Caco-2 (cell line): ENCODE measurements at regions of chr4 and their contacts with region 1.

Region 1: GRCh38 chr4:81351654-81352445 is 119.9 kb downstream of the RASGEF1B start:
- DNase-seq: peak; percentile 62 to 74
- H3K4me3 ChIP-seq: no peak overlapping the region
- H3K4me3 Mint-ChIP-seq: no peak overlapping the region
- H3K27ac Mint-ChIP-seq: no peak overlapping the region
- H3K4me1 ChIP-seq: 0 out of 2 replicates have a peak, but pooled peaks cover 5% of the 10 kb centered on the region
- H3K4me1 Mint-ChIP-seq: peaks cover 7% of the 10 kb centered on the region
- H3K27me3 ChIP-seq: no peaks in the 10 kb centered on the region
- H3K27me3 Mint-ChIP-seq: no peaks in the 10 kb centered on the region
- CTCF ChIP-seq: peak; percentile 79 to 84

Region 2: DNA sequence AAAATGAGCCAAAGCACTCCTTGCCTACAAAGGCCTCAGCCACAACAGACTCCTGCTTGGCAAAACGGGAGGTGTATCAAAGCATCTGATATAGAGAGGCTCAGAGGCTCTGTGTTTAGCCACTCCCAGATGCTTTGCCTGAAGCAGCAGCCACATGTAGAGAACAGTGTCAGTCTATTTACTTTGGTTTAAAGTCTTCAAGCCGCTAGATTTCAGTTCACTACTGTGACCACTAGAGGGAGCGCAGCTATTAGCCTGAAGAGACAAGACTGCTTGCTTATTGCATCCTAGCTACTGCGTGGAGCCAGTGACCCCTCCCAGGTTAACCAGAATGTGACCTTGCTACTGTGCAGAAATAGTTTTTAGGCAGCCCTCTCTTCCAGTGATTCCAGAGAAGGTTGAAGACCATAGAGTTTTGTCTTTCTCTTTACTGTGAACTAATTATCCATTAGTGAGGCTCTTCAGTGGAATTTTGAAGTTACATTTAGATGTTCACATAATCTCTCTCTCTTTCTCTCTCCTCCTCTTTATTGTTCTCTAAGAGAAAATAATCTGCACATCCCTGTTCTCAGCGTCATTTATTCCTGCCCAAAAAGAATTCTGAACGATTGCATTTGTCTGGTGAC is 282.0 kb before region 1 on chr4:
- CTCF ChIA-PET with region 1: interaction called, 36 read pairs
- POLR2A ChIA-PET with region 1: no interaction called
- intact Hi-C with region 1: loop called (anchors 1 kb)
- DNase-seq: peak; percentile 83 to 84
- H3K4me3 ChIP-seq: no peak overlapping the region
- H3K4me3 Mint-ChIP-seq: no peak overlapping the region
- H3K27ac Mint-ChIP-seq: no peak overlapping the region
- H3K4me1 ChIP-seq: no peaks in the 10 kb centered on the region
- H3K4me1 Mint-ChIP-seq: no peaks in the 10 kb centered on the region
- H3K27me3 ChIP-seq: no peaks in the 10 kb centered on the region
- H3K27me3 Mint-ChIP-seq: peaks cover 9% of the 10 kb centered on the region
- CTCF ChIP-seq: peak; percentile 80

Region 3: GRCh38 chr4:81084029-81084428 is 267.8 kb before region 1 on chr4:
- CTCF ChIA-PET with region 1: interaction called, 16 read pairs
- POLR2A ChIA-PET with region 1: no interaction called
- intact Hi-C with region 1: loop called (anchors 1 kb)
- DNase-seq: peak in 1 of 2 experiments; percentile 19
- H3K4me3 ChIP-seq: no peak overlapping the region
- H3K4me3 Mint-ChIP-seq: no peak overlapping the region
- H3K27ac Mint-ChIP-seq: no peak overlapping the region
- H3K4me1 ChIP-seq: no peaks in the 10 kb centered on the region
- H3K4me1 Mint-ChIP-seq: no peaks in the 10 kb centered on the region
- H3K27me3 ChIP-seq: no peaks in the 10 kb centered on the region
- H3K27me3 Mint-ChIP-seq: no peaks in the 10 kb centered on the region
- CTCF ChIP-seq: peak; percentile 24 to 53

Region 4: DNA sequence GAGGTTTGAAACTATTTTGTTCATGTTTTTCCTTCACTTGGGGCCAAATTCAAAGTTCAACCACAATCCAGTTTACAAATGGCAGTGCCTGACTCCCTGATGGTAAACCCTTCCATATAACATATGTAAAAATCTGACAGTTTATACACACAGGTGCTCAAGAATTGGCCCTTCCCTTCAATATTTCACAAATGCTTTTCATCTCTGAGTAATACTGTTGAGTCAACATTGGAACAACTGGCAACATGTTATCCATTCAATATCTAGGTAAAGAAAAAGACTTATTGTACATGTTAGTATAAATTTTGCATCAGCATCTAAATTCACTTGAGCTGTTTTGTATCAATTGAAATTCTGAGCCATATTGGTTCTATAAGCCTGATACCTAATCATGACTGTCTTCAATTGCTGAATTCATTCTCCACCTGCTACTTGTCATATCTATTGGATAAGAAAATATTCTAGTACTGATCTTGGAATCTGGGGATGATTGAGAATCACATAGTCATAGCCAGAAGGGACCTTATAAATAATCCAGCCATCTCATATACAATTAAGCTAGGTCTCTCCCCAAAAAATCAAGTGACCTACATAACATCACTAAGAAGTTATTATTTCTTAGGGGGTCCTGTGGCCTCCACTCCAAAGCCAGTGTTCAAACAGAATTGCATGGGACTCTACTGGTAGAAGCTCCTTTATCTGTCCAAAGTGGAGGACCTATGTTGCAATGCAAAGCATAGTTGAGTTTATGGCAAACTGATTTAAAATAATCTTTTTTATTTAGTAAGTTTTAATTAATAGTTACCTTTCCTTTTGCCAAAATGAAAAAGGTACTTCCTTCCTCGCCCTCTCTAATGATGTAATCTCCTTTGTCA is 198.8 kb before region 1 on chr4:
- CTCF ChIA-PET with region 1: no interaction called
- POLR2A ChIA-PET with region 1: no interaction called
- intact Hi-C with region 1: loop called (anchors 1 kb)
- DNase-seq: peak in 1 of 2 experiments; percentile 3
- H3K4me3 ChIP-seq: peak overlapping the region; percentile 36
- H3K4me3 Mint-ChIP-seq: peak overlapping the region; percentile 81
- H3K27ac Mint-ChIP-seq: peak overlapping the region; percentile 88
- H3K4me1 ChIP-seq: no peaks in the 10 kb centered on the region; the same call in 1 of the 2 replicates
- H3K4me1 Mint-ChIP-seq: no peaks in the 10 kb centered on the region
- H3K27me3 ChIP-seq: no peaks in the 10 kb centered on the region
- H3K27me3 Mint-ChIP-seq: no peaks in the 10 kb centered on the region
- CTCF ChIP-seq: no peak

Region 5: DNA sequence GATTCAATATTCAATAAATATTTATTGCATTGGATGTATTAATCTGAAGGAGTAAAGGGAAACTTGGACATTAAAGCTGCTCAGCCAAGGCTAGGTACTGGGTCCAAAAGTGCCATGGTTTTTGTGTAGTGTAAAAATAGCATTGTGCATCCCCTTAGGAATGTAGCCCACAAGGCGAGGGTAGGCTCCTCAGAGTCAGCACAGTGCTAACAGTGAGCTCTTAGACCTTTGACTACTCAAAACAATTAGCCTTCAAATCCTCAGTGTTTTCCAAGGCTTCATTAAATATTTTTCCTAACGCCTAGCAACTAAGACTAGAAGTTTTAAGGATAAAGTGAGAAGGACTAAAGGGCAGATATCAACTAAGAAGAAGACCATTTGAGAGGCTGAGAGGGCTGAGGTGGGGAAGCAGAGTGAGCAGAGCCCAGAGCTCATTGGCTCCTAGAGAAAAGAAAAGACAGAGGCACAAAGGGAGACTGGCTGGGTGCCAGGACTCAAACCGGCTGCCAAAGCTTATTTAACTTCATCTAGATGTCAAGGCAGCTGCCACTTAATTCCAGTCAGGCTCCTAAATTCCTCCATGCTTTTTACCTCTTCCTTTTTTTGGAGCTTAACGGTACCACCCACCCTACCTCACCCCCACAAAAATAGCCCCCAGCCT is 153.9 kb before region 1 on chr4:
- CTCF ChIA-PET with region 1: no interaction called
- POLR2A ChIA-PET with region 1: no interaction called
- intact Hi-C with region 1: loop called (anchors 5 kb)
- DNase-seq: no peak
- H3K4me3 ChIP-seq: no peak overlapping the region
- H3K4me3 Mint-ChIP-seq: no peak overlapping the region
- H3K27ac Mint-ChIP-seq: no peak overlapping the region
- H3K4me1 ChIP-seq: no peaks in the 10 kb centered on the region
- H3K4me1 Mint-ChIP-seq: peaks cover 2% of the 10 kb centered on the region
- H3K27me3 ChIP-seq: no peaks in the 10 kb centered on the region
- H3K27me3 Mint-ChIP-seq: no peaks in the 10 kb centered on the region
- CTCF ChIP-seq: no peak

Region 6: GRCh38 chr4:81215931-81216330 is 135.9 kb before region 1 on chr4:
- CTCF ChIA-PET with region 1: no interaction called
- POLR2A ChIA-PET with region 1: no interaction called
- intact Hi-C with region 1: loop called (anchors 1 kb)
- DNase-seq: no peak
- H3K4me3 ChIP-seq: no peak overlapping the region
- H3K4me3 Mint-ChIP-seq: no peak overlapping the region
- H3K27ac Mint-ChIP-seq: no peak overlapping the region
- H3K4me1 ChIP-seq: no peaks in the 10 kb centered on the region
- H3K4me1 Mint-ChIP-seq: no peaks in the 10 kb centered on the region
- H3K27me3 ChIP-seq: no peaks in the 10 kb centered on the region
- H3K27me3 Mint-ChIP-seq: no peaks in the 10 kb centered on the region
- CTCF ChIP-seq: no peak

Region 7: GRCh38 chr4:81255524-81255923 is 96.3 kb before region 1 on chr4:
- CTCF ChIA-PET with region 1: interaction called, 3 read pairs
- POLR2A ChIA-PET with region 1: no interaction called
- intact Hi-C with region 1: loop called (anchors 2 kb)
- DNase-seq: no peak
- H3K4me3 ChIP-seq: no peak overlapping the region
- H3K4me3 Mint-ChIP-seq: no peak overlapping the region
- H3K27ac Mint-ChIP-seq: no peak overlapping the region
- H3K4me1 ChIP-seq: peaks cover 36% of the 10 kb centered on the region
- H3K4me1 Mint-ChIP-seq: peaks cover 19% of the 10 kb centered on the region
- H3K27me3 ChIP-seq: no peaks in the 10 kb centered on the region
- H3K27me3 Mint-ChIP-seq: no peaks in the 10 kb centered on the region
- CTCF ChIP-seq: no peak

Region 8: GRCh38 chr4:81606801-81607501 is 255.1 kb after region 1 on chr4:
- CTCF ChIA-PET with region 1: no interaction called
- POLR2A ChIA-PET with region 1: no interaction called
- intact Hi-C with region 1: no loop called
- DNase-seq: no peak
- H3K4me3 ChIP-seq: no peak overlapping the region
- H3K4me3 Mint-ChIP-seq: no peak overlapping the region
- H3K27ac Mint-ChIP-seq: no peak overlapping the region
- H3K4me1 ChIP-seq: no peaks in the 10 kb centered on the region
- H3K4me1 Mint-ChIP-seq: peaks cover 8% of the 10 kb centered on the region
- H3K27me3 ChIP-seq: no peaks in the 10 kb centered on the region
- H3K27me3 Mint-ChIP-seq: no peaks in the 10 kb centered on the region
- CTCF ChIP-seq: no peak